ENCODE measurements at regions of chr18 and their contacts with region 1.

Region 1: DNA sequence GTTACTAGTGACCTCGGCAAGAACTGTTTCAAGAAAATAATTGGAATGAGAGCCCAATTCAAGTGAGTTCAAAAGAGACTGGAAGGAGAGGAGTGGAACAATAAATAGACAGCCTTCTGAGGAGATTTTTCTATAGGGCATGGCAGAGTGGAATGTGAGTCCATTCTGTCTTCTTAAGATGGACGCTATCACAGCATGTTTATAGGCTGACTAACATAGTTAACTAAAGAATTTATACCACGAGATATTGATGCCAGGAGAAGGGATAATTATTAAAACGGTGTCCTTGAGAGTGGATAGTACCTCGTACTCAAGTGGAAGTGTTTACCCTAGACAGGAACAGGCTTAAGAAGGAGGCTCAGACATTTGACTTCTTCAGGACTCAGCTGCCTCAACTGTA is 143.5 kb upstream of the RBBP8 start:
- DNase-seq: no peak
- ATAC-seq: no peak
- H3K4me3 ChIP-seq: no peak overlapping the region
- H3K27ac ChIP-seq: no peak overlapping the region
- H3K4me1 ChIP-seq: no peaks in the 10 kb centered on the region
- H3K27me3 ChIP-seq: no peaks in the 10 kb centered on the region
- CTCF ChIP-seq: no peak

Region 2: GRCh38 chr18:22378672-22379282 is 410.8 kb before region 1 on chr18:
- intact Hi-C with region 1: no loop called
- DNase-seq: peak; percentile 14 to 27
- ATAC-seq: peak in 7 of 8 donors; percentile 64 to 87 (median 72)
- H3K4me3 ChIP-seq: no peak overlapping the region
- H3K27ac ChIP-seq: no peak overlapping the region
- H3K4me1 ChIP-seq: no peaks in the 10 kb centered on the region
- H3K27me3 ChIP-seq: no peaks in the 10 kb centered on the region
- CTCF ChIP-seq: peak; percentile 15 to 66 (median 56)

Region 3: DNA sequence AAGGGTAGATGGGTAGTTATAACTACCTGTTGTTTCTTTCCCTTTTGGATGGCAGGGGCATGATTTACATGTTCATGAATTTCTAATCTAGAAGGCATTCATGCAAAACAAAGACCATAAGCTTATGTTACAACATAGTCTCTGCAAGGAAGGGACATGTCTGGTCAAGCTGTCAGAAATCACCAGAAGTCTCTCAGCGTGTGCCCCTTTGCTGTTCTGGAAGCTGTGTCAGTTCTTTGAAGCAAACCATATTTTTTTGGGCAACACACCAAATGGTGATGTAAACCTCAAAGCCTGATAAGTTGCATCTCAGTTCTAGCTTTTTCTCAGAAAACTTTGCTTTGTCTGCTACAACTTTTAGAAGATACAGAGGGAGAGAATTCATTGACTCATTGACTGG is 198.4 kb before region 1 on chr18:
- intact Hi-C with region 1: loop called in 1 of 10 experiments (anchors 10 kb)
- DNase-seq: no peak
- ATAC-seq: no peak
- H3K4me3 ChIP-seq: no peak overlapping the region
- H3K27ac ChIP-seq: no peak overlapping the region
- H3K4me1 ChIP-seq: no peaks in the 10 kb centered on the region
- H3K27me3 ChIP-seq: no peaks in the 10 kb centered on the region
- CTCF ChIP-seq: no peak

Region 4: DNA sequence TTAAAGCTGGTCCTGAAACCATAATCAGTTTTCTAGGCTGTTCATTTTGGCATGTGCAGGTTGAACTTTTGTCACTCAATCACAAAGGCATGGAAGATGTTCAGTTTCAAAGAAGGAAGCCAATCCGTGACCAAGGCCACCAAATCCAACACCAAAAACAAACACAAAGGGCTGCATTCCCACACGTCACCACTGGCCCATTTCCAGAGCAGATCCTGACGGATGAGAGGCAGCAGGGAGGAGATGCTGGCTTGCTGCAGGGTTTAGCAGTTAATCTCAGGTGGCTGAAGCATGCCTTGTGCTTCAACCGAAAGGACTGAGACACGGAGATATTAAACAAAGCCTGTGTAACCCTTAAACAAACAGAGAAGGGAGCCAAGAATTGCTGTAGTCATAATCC is 180.0 kb before region 1 on chr18:
- intact Hi-C with region 1: loop called in 1 of 10 experiments (anchors 10 kb)
- DNase-seq: peak; percentile 66 to 86
- ATAC-seq: peak; percentile 47 to 84 (median 63)
- H3K4me3 ChIP-seq: no peak overlapping the region
- H3K27ac ChIP-seq: peak overlapping the region in 9 of 10 donors; percentile 1 to 79 (median 57)
- H3K4me1 ChIP-seq: peaks cover 0 to 60% (median 29%) of the 10 kb centered on the region in 9 donors
- H3K27me3 ChIP-seq: no peaks in the 10 kb centered on the region
- CTCF ChIP-seq: no peak